Right cardiac atrium (tissue), 5 donors: ENCODE measurements at regions of chr1 and their contacts with region 1.

Region 1: DNA sequence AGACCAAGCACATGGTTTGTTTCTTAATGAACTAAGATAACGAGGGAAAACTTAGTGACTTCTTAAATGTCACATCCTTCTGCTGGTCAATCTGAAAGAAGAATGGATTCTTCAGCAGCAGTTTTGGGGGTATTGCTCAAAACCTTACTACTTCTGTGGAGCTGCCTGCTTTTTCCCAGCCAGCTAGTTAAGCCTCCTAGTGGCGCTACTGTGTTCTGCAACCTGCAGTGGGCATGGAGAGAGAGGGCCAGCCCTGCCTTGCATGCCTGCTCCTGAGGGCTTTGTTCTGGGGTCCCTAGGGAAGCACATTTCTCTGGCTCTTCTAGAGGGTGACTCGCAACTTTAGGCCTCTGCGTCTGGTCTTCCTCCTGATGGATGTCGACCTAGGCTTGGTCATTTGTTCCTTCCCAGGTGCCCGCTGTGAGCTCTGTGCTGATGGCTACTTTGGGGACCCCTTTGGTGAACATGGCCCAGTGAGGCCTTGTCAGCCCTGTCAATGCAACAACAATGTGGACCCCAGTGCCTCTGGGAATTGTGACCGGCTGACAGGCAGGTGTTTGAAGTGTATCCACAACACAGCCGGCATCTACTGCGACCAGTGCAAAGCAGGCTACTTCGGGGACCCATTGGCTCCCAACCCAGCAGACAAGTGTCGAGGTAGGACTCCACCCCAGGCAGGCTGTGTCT is 42.0 kb downstream of the LAMC2 start:
- DNase-seq: peak; percentile 51 to 82 (median 72)
- ATAC-seq: peak; percentile 34 to 78
- H3K4me3 ChIP-seq: no peak overlapping the region
- H3K27ac ChIP-seq: no peak overlapping the region
- H3K4me1 ChIP-seq: no peaks in the 10 kb centered on the region
- H3K27me3 ChIP-seq: no peaks in the 10 kb centered on the region

Region 2: GRCh38 chr1:182739545-182739944 is 488.6 kb before region 1 on chr1:
- intact Hi-C with region 1: no loop called
- DNase-seq: peak in 1 of 3 donors; percentile 51
- ATAC-seq: no peak
- H3K4me3 ChIP-seq: no peak overlapping the region
- H3K27ac ChIP-seq: no peak overlapping the region
- H3K4me1 ChIP-seq: no peaks in the 10 kb centered on the region
- H3K27me3 ChIP-seq: no peaks in the 10 kb centered on the region

Region 3: GRCh38 chr1:182955596-182956588 is 272.2 kb before region 1 on chr1:
- intact Hi-C with region 1: loop called in 3 of 4 experiments (anchors 5 to 10 kb)
- DNase-seq: peak in 1 of 3 donors; percentile 28
- ATAC-seq: peak in 1 of 2 donors; percentile 82
- H3K4me3 ChIP-seq: no peak overlapping the region
- H3K27ac ChIP-seq: no peak overlapping the region
- H3K4me1 ChIP-seq: no peaks in the 10 kb centered on the region
- H3K27me3 ChIP-seq: no peaks in the 10 kb centered on the region

Region 4: DNA sequence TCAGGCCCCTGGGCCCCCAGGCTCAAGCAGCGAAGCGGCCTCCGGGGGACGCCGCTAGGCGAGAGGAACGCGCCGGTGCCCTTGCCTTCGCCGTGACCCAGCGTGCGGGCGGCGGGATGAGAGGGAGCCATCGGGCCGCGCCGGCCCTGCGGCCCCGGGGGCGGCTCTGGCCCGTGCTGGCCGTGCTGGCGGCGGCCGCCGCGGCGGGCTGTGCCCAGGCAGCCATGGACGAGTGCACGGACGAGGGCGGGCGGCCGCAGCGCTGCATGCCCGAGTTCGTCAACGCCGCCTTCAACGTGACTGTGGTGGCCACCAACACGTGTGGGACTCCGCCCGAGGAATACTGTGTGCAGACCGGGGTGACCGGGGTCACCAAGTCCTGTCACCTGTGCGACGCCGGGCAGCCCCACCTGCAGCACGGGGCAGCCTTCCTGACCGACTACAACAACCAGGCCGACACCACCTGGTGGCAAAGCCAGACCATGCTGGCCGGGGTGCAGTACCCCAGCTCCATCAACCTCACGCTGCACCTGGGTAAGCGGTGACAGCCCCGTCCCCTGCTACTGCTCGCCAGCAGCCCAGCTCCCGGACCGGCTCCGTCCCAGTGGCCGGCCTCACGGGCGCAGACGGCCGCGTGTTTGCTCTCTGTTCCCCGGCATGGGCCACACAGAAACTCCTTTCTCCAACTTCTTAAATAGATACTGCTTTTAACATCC is 204.3 kb before region 1 on chr1:
- intact Hi-C with region 1: loop called in 1 of 4 experiments (anchors 10 kb)
- DNase-seq: peak; percentile 62 to 84 (median 82)
- ATAC-seq: peak; percentile 44 to 51
- H3K4me3 ChIP-seq: peak overlapping the region; percentile 97
- H3K27ac ChIP-seq: peak overlapping the region; percentile 94
- H3K4me1 ChIP-seq: no peaks in the 10 kb centered on the region
- H3K27me3 ChIP-seq: no peaks in the 10 kb centered on the region

Region 5: DNA sequence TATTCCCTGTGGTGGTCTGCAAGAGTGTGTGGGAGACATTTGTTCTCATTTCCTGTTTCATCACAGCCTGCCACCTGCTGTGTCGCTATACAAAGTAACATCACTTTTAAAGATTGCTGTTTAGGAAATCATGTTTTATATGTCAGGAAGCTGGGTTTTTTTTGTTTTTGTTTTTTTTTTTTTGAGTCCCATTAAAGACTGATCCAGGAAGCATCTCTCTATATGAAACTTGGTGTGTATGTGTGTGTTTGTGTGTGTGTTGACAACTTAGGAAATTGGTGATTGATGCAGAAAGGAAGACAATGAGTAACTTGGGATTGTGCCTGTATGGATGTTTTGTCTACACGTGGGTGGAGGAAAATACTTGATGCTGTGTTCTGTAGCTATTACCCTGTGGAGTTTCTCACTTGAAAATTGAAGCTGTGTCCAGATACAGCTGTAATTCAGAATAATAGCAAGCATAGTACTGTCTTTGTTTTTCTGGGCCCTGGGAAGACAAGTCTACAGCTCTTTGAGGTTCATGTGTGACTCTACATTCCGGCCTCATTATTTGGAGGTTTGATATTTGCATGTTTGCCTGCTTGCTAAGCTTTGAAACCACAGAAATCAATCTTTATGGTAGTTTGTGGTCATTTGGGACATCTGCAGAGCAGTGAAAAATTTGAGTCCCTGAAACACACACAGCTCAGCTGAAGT is 157.0 kb before region 1 on chr1:
- intact Hi-C with region 1: no loop called
- DNase-seq: no peak
- ATAC-seq: no peak
- H3K4me3 ChIP-seq: no peak overlapping the region
- H3K27ac ChIP-seq: peak overlapping the region; percentile 24
- H3K4me1 ChIP-seq: peaks cover 14% of the 10 kb centered on the region
- H3K27me3 ChIP-seq: no peaks in the 10 kb centered on the region